Activated T-helper 2 cell treated with anti-CD3 and anti-CD28 coated beads, Interferon-gamma antibody, Interleukin-2, Interleukin-4, amounts not matched to agents 10 μg/mL and 5 μg/mL and 100 μg/mL, durations not matched to agents 14 hours and 24 hours and 36 hours (primary cell): ENCODE measurements at regions of chr3 and their contacts with region 1.

Region 1: DNA sequence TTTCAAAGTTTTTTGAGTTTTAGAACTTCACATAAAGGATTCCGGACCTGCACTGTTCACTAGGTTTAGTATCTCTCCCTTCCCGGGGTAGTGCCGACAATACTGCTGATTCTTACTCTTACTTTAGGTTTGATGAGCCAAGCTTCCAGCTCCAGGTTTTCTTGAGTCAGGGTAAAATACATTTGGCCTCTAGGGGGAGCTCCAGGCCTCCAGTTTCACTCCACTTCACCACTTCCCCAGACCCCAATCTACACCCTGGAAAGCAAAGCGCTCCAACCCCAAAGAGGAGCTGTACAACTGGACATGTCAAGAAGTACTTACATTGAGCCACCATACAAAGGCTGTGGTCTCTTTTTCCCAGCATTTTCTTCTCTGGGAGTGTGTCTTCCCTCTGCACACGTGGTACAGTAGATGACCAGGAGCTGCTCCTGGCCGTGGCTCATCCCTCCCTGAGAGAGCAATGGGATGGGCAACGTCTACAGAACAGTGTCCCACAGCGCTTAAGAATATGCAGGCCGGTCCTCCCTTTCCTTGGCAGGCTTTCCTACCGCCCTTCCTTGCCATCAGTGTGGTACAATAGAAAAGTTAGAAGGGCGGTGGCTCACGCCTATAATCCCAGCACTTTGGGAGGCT is 93.9 kb upstream of the CCDC80 start:
- DNase-seq: peak; percentile 51
- H3K4me3 Mint-ChIP-seq: no peak overlapping the region
- H3K27ac Mint-ChIP-seq: no peak overlapping the region
- H3K4me1 Mint-ChIP-seq: peaks cover 47% of the 10 kb centered on the region
- H3K27me3 Mint-ChIP-seq: no peaks in the 10 kb centered on the region

Region 2: DNA sequence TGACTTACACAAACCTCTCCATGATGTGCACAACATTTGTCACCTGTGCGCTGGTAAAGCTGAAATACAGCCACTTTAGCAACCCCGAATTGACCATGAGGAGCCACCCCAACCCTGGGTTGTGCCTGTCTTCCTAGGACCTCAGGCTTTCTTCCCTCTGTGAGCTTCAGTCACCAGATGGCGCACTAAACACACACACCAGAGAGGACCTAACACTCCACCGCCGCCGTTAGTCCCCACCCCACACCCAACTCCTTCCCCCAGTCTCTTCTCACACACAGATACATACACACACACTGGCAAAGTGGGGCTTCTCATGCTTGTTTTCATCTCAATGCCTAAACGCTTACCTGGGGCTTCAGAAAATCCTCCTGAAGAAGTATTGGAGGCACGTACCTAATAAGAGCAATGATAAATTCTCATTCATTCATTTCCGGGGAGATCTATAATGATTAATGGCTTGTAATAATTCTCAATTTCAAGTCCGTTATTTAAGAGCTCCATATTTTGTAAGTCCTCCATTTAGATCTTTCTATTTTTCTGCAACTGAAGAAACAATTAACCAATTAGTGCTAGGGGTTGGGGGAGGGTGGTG is 91.8 kb before region 1 on chr3:
- intact Hi-C with region 1: loop called (anchors 1 kb)
- DNase-seq: peak; percentile 75
- H3K4me3 Mint-ChIP-seq: peak overlapping the region; percentile 65
- H3K27ac Mint-ChIP-seq: no peak overlapping the region
- H3K4me1 Mint-ChIP-seq: peaks cover 23% of the 10 kb centered on the region
- H3K27me3 Mint-ChIP-seq: peaks cover 10% of the 10 kb centered on the region

Region 3: DNA sequence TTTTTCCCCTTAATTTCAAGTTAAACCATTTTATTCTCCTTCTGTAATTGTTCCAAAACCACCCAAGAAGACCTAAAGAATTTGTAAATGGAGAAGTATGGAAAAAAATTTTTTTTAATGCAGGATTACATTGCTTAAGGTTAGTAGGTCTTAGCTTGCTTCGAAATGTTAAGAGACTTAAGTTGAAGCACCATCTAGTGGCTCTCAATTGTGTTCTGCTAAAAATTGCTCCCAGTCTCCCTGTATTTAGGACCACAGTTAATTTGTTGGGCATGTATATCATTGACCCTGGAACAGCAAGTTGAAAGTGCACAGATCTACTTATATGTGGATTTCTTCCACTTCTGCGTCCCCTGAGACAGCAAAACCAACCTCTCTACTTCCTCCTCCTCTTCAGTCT is 79.4 kb after region 1 on chr3:
- intact Hi-C with region 1: loop called (anchors 5 kb)
- DNase-seq: no peak
- H3K4me3 Mint-ChIP-seq: no peak overlapping the region
- H3K27ac Mint-ChIP-seq: no peak overlapping the region
- H3K4me1 Mint-ChIP-seq: peaks cover 27% of the 10 kb centered on the region
- H3K27me3 Mint-ChIP-seq: peaks cover 8% of the 10 kb centered on the region

Region 4: GRCh38 chr3:112979240-112979832 is 244.5 kb after region 1 on chr3:
- intact Hi-C with region 1: loop called (anchors 2 kb)
- DNase-seq: no peak
- H3K4me3 Mint-ChIP-seq: no peak overlapping the region
- H3K27ac Mint-ChIP-seq: no peak overlapping the region
- H3K4me1 Mint-ChIP-seq: peaks cover 61% of the 10 kb centered on the region
- H3K27me3 Mint-ChIP-seq: peaks cover 5% of the 10 kb centered on the region